ENCODE measurements at regions of chr5 and their contacts with region 1.

Region 1: DNA sequence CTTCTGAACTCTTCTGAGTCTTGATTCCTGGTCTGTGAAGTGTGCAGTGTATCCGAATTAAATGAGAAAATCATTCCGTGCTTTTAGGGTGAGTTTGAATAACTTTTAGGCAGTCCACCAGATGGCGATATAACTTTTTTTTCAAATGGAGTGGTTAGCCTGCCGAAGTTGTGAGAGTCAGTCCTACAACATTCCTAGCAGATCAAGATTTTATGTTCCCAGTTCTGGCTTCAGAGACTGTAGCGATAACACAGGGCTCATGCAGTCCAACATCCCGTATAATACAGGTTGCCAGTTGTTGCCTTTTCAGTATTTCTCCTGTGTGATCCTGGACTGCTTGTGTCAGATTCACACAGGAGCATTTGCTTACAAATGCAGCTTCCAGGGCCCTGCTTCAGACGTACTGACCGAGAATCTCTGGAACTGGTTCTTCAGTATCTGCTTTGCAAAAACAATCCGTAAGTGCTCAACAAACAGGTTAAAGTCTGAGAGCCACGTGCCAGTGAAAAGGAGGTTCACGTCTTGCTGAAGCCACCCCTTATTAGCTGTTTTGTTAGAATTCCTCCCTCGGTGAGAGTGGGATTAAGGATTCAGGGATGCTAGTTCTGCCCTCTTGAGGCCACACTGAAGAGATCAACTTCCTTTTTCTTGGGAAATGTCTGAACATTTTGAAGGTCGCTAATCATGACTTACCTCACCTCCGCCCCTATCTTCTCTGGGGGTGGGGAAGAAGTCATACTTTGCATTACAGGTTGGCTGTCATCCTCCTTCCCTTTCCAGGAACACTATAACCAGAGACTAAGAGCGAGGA is 22.8 kb downstream of the SMIM3 start:
- DNase-seq: no peak
- H3K4me3 ChIP-seq: peak overlapping the region; percentile 39
- CTCF ChIP-seq: peak; percentile 53

Region 2: GRCh38 chr5:150734579-150735384 is 66.5 kb before region 1 on chr5:
- CTCF ChIA-PET with region 1: interaction called, 12 read pairs
- POLR2A ChIA-PET with region 1: no interaction called
- DNase-seq: no peak
- H3K4me3 ChIP-seq: no peak overlapping the region
- CTCF ChIP-seq: no peak

Region 3: GRCh38 chr5:150778517-150779396 is 22.6 kb before region 1 on chr5 and contains the start of gene SMIM3:
- CTCF ChIA-PET with region 1: interaction called, 40 read pairs
- POLR2A ChIA-PET with region 1: interaction called, 3 read pairs
- DNase-seq: no peak
- H3K4me3 ChIP-seq: peak within 1 kb of the TSS; percentile 91
- CTCF ChIP-seq: peak; percentile 56

Region 4: GRCh38 chr5:150789943-150790611 is 11.2 kb before region 1 on chr5:
- CTCF ChIA-PET with region 1: interaction called, 60 read pairs
- POLR2A ChIA-PET with region 1: no interaction called
- DNase-seq: peak; percentile 99
- H3K4me3 ChIP-seq: peak overlapping the region; percentile 25; the same call in 1 of the 2 replicates
- CTCF ChIP-seq: no peak

Region 5: GRCh38 chr5:150816946-150817345 is 15.6 kb after region 1 on chr5:
- CTCF ChIA-PET with region 1: interaction called, 21 read pairs
- POLR2A ChIA-PET with region 1: no interaction called
- DNase-seq: no peak
- H3K4me3 ChIP-seq: no peak overlapping the region
- CTCF ChIP-seq: no peak

Region 6: DNA sequence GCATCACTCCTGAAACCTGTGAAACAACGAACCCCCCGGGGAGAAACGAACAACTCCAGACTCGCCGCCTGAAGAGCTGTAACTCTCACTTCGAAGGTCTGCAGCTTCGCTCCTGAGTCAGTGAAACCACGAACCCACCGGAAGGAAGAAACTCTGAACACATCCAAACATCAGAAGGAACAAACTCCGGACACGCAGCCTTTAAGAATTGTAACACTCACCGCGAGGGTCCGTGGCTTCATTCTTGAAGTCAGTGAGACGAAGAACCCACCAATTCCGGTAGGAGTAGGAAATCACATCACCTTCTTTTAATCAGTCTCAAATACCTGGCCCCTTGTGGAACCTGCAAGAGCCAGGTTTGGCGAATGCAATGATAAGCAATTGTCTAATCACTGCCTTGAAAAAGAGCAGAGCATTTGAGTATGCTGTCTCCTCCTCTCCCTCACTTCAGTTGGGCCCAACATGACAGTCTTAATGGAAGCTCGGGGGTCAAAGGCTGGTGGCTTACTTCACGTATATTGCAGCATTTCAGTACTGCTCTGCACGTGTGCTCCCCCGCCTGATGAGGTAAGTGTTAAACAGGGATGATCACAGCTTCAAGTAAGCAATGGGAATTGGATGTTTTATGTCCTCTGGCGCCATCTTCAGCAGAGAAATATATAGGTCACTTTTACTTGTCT is 45.5 kb after region 1 on chr5:
- CTCF ChIA-PET with region 1: interaction called, 46 read pairs
- POLR2A ChIA-PET with region 1: no interaction called
- DNase-seq: peak; percentile 52
- H3K4me3 ChIP-seq: no peak overlapping the region
- CTCF ChIP-seq: peak; percentile 49

Region 7: GRCh38 chr5:151164686-151165392 is 363.5 kb after region 1 on chr5:
- CTCF ChIA-PET with region 1: interaction called, 32 read pairs
- POLR2A ChIA-PET with region 1: no interaction called
- DNase-seq: no peak
- H3K4me3 ChIP-seq: no peak overlapping the region
- CTCF ChIP-seq: peak; percentile 87